ENCODE measurements at regions of chr1 and their contacts with region 1.

Region 1: DNA sequence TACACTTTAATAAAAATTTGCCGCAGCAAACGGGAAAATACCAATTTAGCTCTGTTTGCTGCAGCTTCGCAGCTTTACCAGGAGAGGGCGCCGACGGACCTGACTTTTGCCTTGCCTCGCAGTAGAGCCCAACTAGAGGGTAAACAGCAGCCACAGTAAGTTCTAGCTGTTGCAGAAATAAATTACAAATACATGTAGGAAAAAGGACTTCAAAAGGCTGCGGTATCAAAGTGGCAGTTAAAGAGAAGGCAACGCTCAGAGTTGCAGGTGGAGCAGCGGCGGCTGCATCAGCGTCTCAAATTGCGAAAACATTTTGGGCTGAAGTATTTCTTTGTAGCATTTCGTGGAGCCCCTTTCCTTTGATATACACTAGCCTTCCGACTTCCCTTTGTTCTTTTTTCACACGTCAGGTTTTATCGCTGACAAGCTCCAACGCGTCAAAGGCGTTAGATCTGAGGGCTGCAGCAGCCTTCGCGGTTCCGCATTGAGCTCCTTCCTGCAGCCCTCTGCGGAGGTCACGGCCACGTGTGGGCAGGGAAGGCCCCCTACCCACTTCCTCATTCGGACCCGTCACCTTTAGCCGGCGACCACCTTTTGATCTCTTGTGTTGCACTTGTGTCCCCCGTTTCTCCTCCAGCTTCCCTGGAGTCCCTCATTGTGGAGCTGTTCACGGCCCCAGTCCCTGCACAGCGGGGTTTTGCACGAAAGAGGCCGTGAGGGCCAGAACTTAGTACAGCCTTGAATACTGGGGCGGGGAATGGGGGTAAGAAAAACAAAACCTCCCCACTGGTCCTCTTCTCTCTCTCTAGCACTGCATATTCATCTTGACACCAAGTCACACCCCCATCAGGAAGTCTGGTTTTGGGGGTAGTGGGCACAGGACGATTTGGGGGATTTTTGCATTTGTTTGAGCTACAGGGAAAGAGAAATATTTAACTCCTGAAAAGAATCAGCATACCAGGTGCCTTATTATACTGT is 72.8 kb downstream of the S1PR1 start:
- DNase-seq: peak; percentile 50 to 76
- H3K4me3 ChIP-seq: peak overlapping the region; percentile 11; the same call in 1 of the 2 replicates
- H3K4me1 ChIP-seq: peaks cover 4% of the 10 kb centered on the region
- H3K27me3 ChIP-seq: peaks cover 5% of the 10 kb centered on the region; the same call in 1 of the 2 replicates

Region 2: GRCh38 chr1:101357444-101357986 is 47.9 kb after region 1 on chr1:
- in situ Hi-C with region 1: loop called (anchors 5 kb)
- DNase-seq: peak; percentile 67 to 77
- H3K4me3 ChIP-seq: no peak overlapping the region
- H3K4me1 ChIP-seq: no peaks in the 10 kb centered on the region
- H3K27me3 ChIP-seq: no peaks in the 10 kb centered on the region

Region 3: DNA sequence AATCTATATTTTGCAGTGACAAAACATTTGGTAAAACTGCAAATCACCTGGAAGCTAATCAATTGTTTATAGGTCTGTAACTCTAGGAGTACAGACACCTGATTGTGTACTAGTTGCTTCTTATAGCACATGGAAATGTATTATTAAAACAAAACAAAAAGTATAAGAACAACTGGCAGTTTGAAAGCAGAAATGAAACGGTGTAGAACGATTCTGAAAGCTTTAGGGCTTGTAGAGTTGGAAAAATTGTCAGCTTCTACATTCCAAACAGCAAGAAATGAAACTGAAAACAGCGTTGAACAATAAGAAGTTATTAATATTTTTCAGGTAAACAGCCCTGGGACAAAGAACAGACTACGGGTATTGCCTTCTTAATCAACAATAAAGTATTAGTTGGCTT is 413.8 kb after region 1 on chr1:
- in situ Hi-C with region 1: no loop called
- DNase-seq: no peak
- H3K4me3 ChIP-seq: no peak overlapping the region
- H3K4me1 ChIP-seq: no peaks in the 10 kb centered on the region
- H3K27me3 ChIP-seq: no peaks in the 10 kb centered on the region